ENCODE measurements at regions of chr11 and their contacts with region 1.

Region 1: GRCh38 chr11:95200781-95201457 is 30.1 kb downstream of the SESN3 start:
- DNase-seq: no peak
- ATAC-seq: no peak
- H3K4me3 ChIP-seq: no peak overlapping the region
- H3K4me3 Mint-ChIP-seq: peak overlapping the region in 1 of 10 donors; percentile 14
- H3K27ac ChIP-seq: no peak overlapping the region
- H3K27ac Mint-ChIP-seq: peak overlapping the region in 2 of 9 donors; percentile 14 to 68
- H3K4me1 ChIP-seq: peaks cover 0 to 11% of the 10 kb centered on the region in 2 donors
- H3K4me1 Mint-ChIP-seq: peaks cover 17 to 85% (median 66%) of the 10 kb centered on the region in 7 donors
- H3K27me3 ChIP-seq: no peaks in the 10 kb centered on the region
- H3K27me3 Mint-ChIP-seq: no peaks in the 10 kb centered on the region

Region 2: GRCh38 chr11:95187723-95188122 is 13.2 kb before region 1 on chr11:
- CTCF ChIA-PET with region 1: interaction called, 3 read pairs
- POLR2A ChIA-PET with region 1: no interaction called
- intact Hi-C with region 1: loop called in 1 of 2 experiments (anchors 2 kb)
- DNase-seq: no peak
- ATAC-seq: no peak
- H3K4me3 ChIP-seq: no peak overlapping the region
- H3K4me3 Mint-ChIP-seq: peak overlapping the region in 1 of 10 donors; percentile 30
- H3K27ac ChIP-seq: no peak overlapping the region
- H3K27ac Mint-ChIP-seq: peak overlapping the region in 5 of 9 donors; percentile 5 to 52 (median 16)
- H3K4me1 ChIP-seq: no peaks in the 10 kb centered on the region
- H3K4me1 Mint-ChIP-seq: peaks cover 6 to 52% (median 31%) of the 10 kb centered on the region in 7 donors
- H3K27me3 ChIP-seq: no peaks in the 10 kb centered on the region
- H3K27me3 Mint-ChIP-seq: no peaks in the 10 kb centered on the region

Region 3: DNA sequence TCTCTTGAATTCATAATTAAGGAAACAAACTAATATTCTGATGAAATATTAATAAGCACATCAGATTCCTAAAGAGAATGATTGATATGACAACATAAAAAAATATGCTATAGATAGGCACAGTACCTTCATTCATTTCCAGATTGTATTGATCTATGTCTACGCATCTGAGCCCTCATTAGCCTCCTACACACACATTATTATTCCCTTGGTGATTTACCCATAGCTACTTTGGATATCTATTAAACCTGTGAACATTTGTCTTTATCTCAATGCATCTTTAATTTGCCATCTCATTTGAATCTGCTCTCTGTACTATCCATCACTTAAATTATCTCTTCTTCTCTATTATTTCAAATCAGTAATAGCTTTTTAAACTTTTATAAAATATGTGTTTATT is 11.7 kb after region 1 on chr11:
- CTCF ChIA-PET with region 1: interaction called, 3 read pairs
- POLR2A ChIA-PET with region 1: interaction called, 8 read pairs
- intact Hi-C with region 1: loop called in 1 of 2 experiments (anchors 1 kb)
- DNase-seq: no peak
- ATAC-seq: no peak
- H3K4me3 ChIP-seq: no peak overlapping the region
- H3K4me3 Mint-ChIP-seq: peak overlapping the region in 1 of 10 donors; percentile 10
- H3K27ac ChIP-seq: no peak overlapping the region
- H3K27ac Mint-ChIP-seq: peak overlapping the region in 1 of 9 donors; percentile 60
- H3K4me1 ChIP-seq: peaks cover 0 to 6% of the 10 kb centered on the region in 2 donors
- H3K4me1 Mint-ChIP-seq: peaks cover 5 to 54% (median 41%) of the 10 kb centered on the region in 7 donors
- H3K27me3 ChIP-seq: no peaks in the 10 kb centered on the region
- H3K27me3 Mint-ChIP-seq: no peaks in the 10 kb centered on the region

Region 4: GRCh38 chr11:95276139-95276538 is 75.2 kb after region 1 on chr11:
- CTCF ChIA-PET with region 1: no interaction called
- POLR2A ChIA-PET with region 1: no interaction called
- intact Hi-C with region 1: no loop called
- DNase-seq: no peak
- ATAC-seq: no peak
- H3K4me3 ChIP-seq: no peak overlapping the region
- H3K4me3 Mint-ChIP-seq: no peak overlapping the region
- H3K27ac ChIP-seq: no peak overlapping the region
- H3K27ac Mint-ChIP-seq: no peak overlapping the region
- H3K4me1 ChIP-seq: no peaks in the 10 kb centered on the region
- H3K4me1 Mint-ChIP-seq: peaks cover 0 to 2% (median 0%) of the 10 kb centered on the region in 7 donors
- H3K27me3 ChIP-seq: no peaks in the 10 kb centered on the region
- H3K27me3 Mint-ChIP-seq: no peaks in the 10 kb centered on the region

Region 5: GRCh38 chr11:95521133-95521542 is 320.2 kb after region 1 on chr11:
- CTCF ChIA-PET with region 1: no interaction called
- POLR2A ChIA-PET with region 1: no interaction called
- intact Hi-C with region 1: no loop called
- DNase-seq: no peak
- ATAC-seq: no peak
- H3K4me3 ChIP-seq: no peak overlapping the region
- H3K4me3 Mint-ChIP-seq: no peak overlapping the region
- H3K27ac ChIP-seq: no peak overlapping the region
- H3K27ac Mint-ChIP-seq: no peak overlapping the region
- H3K4me1 ChIP-seq: no peaks in the 10 kb centered on the region
- H3K4me1 Mint-ChIP-seq: peaks cover 0 to 4% (median 0%) of the 10 kb centered on the region in 7 donors
- H3K27me3 ChIP-seq: no peaks in the 10 kb centered on the region
- H3K27me3 Mint-ChIP-seq: no peaks in the 10 kb centered on the region